Caco-2 (cell line): ENCODE measurements at regions of chr1 and their contacts with region 1.

Region 1: DNA sequence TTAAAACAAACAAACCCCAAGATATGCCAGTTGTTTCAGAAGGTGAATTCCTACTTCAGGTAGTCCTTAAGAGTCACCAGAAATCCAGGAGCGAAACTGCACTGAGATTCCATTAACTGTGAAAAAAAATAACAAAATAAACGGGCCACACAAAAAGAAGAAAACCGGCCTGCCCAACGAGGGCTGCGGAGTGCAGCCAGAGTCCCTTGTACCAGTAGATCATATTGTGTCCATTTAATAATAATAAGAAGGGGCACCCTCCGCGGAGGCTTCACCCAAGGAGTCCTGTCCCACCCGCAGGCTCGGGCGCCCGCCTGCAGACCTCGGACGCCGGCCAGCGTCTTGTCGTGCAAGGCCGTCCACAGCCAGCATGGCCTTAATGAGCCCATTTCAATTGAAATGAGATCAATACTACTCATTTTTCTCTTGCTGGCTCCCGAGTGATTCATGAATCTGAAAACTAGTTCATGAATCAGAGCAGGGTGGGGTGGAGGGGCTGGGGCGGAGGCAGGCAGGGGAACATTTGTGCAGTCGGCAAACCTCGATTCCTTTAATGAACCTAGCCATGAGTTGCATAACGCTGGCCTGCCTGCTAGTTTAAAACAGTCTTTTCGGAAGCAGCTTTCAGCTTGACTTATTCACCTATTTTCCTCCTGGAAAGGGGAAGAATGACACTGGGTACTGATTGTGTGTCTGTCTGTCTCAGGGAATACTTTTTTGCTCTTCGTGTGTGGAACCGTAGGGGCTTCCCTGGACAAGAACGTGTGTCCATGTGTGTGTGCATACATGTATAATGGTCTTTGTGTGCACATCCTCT is 113.1 kb upstream of the IRF2BP2 start:
- DNase-seq: no peak
- H3K4me3 ChIP-seq: no peak overlapping the region
- H3K4me3 Mint-ChIP-seq: peak overlapping the region; percentile 64
- H3K27ac Mint-ChIP-seq: peak overlapping the region; percentile 86
- H3K4me1 ChIP-seq: peaks cover 93% of the 10 kb centered on the region
- H3K4me1 Mint-ChIP-seq: peaks cover 69% of the 10 kb centered on the region
- H3K27me3 ChIP-seq: no peaks in the 10 kb centered on the region
- H3K27me3 Mint-ChIP-seq: no peaks in the 10 kb centered on the region
- CTCF ChIP-seq: no peak

Region 2: DNA sequence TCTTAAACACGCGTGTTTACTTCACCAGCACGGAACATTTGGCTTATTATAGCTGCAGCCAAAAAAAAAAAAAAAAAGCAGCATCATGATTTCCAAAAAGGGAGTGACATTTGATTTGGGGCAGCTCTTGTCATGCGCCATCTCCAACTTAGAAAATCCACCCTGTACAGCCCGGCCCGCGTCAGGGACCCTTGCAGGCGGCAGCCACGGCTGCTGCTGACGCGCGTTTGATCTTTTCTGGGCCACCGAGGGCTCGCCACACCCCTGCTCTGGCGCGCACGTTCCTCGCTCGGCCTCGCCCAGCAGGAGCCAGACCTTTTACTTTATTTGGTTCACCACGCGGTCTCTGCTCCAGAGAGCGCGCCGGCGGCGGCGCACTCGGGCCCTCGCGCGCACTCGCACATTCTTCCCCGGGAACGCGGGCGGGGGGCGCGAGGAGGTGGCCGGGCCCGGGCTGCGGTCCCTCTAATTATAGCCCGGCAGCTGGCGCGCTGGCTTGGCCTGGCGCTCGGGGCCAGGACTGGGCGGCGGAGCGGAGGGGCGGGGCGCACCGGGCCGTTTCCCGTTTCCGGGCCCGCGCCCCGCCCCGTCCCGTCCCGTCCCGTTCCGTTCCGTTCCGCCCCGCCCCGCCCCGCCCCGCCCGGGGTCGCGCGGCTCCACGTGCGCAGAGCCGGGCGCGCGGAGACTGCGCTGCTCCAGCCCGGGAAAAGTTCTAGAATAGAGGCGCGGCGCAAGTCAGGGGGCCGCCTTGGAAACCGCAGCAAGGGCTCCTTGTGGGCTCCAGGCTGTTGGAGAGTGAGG is 123.3 kb before region 1 on chr1:
- CTCF ChIA-PET with region 1: no interaction called
- POLR2A ChIA-PET with region 1: interaction called, 10 read pairs
- intact Hi-C with region 1: no loop called
- DNase-seq: peak; percentile 92 to 93
- H3K4me3 ChIP-seq: peak overlapping the region; percentile 59
- H3K4me3 Mint-ChIP-seq: peak overlapping the region; percentile 89
- H3K27ac Mint-ChIP-seq: peak overlapping the region; percentile 92
- H3K4me1 ChIP-seq: peaks cover 57% of the 10 kb centered on the region
- H3K4me1 Mint-ChIP-seq: peaks cover 23% of the 10 kb centered on the region
- H3K27me3 ChIP-seq: no peaks in the 10 kb centered on the region
- H3K27me3 Mint-ChIP-seq: no peaks in the 10 kb centered on the region
- CTCF ChIP-seq: no peak

Region 3: DNA sequence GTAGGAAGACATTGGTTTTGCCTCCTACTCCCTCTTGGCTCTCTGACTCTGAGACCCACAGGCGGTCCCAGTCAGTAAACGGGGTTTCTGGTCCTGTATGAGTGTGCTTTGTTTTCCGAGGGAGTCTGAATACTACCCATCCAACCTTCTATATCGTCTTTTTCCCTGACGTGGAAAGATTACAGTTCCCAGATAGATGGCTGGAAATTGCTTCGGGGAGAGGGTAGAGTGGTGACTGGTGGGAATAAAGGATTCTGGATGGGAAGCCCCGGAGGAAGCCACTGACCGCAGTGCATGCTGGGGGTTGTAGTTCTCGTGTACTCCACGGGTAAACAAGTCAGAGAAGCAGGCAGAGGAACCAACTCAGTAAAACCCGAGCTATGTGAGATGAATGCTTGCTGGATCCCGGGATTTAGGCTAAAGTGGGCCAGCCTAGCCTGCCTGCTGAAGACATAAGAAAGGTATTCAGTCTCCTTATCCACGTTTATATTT is 47.0 kb before region 1 on chr1:
- CTCF ChIA-PET with region 1: interaction called, 4 read pairs
- POLR2A ChIA-PET with region 1: interaction called, 4 read pairs
- intact Hi-C with region 1: loop called (anchors 2 kb)
- DNase-seq: peak; percentile 80 to 87
- H3K4me3 ChIP-seq: peak overlapping the region; percentile 36
- H3K4me3 Mint-ChIP-seq: peak overlapping the region; percentile 69
- H3K27ac Mint-ChIP-seq: no peak overlapping the region
- H3K4me1 ChIP-seq: peaks cover 16% of the 10 kb centered on the region
- H3K4me1 Mint-ChIP-seq: peaks cover 20% of the 10 kb centered on the region
- H3K27me3 ChIP-seq: no peaks in the 10 kb centered on the region
- H3K27me3 Mint-ChIP-seq: no peaks in the 10 kb centered on the region
- CTCF ChIP-seq: no peak

Region 4: GRCh38 chr1:234772345-234773147 is 49.4 kb after region 1 on chr1:
- CTCF ChIA-PET with region 1: interaction called, 3 read pairs
- POLR2A ChIA-PET with region 1: interaction called, 4 read pairs
- intact Hi-C with region 1: loop called (anchors 1 kb)
- DNase-seq: peak; percentile 87 to 95
- H3K4me3 ChIP-seq: no peak overlapping the region
- H3K4me3 Mint-ChIP-seq: peak overlapping the region; percentile 58
- H3K27ac Mint-ChIP-seq: peak overlapping the region; percentile 90
- H3K4me1 ChIP-seq: peaks cover 53% of the 10 kb centered on the region
- H3K4me1 Mint-ChIP-seq: peaks cover 51% of the 10 kb centered on the region
- H3K27me3 ChIP-seq: no peaks in the 10 kb centered on the region
- H3K27me3 Mint-ChIP-seq: no peaks in the 10 kb centered on the region
- CTCF ChIP-seq: no peak

Region 5: GRCh38 chr1:234955107-234955731 is 232.1 kb after region 1 on chr1:
- CTCF ChIA-PET with region 1: interaction called, 3 read pairs
- POLR2A ChIA-PET with region 1: interaction called, 12 read pairs
- intact Hi-C with region 1: loop called (anchors 1 kb)
- DNase-seq: peak; percentile 82 to 93
- H3K4me3 ChIP-seq: no peak overlapping the region
- H3K4me3 Mint-ChIP-seq: peak overlapping the region; percentile 64
- H3K27ac Mint-ChIP-seq: peak overlapping the region; percentile 99
- H3K4me1 ChIP-seq: peaks cover 69% of the 10 kb centered on the region
- H3K4me1 Mint-ChIP-seq: peaks cover 50% of the 10 kb centered on the region
- H3K27me3 ChIP-seq: no peaks in the 10 kb centered on the region
- H3K27me3 Mint-ChIP-seq: no peaks in the 10 kb centered on the region
- CTCF ChIP-seq: peak in 1 of 2 experiments; percentile 20